ENCODE measurements at regions of chr12 and their contacts with region 1.

Region 1: DNA sequence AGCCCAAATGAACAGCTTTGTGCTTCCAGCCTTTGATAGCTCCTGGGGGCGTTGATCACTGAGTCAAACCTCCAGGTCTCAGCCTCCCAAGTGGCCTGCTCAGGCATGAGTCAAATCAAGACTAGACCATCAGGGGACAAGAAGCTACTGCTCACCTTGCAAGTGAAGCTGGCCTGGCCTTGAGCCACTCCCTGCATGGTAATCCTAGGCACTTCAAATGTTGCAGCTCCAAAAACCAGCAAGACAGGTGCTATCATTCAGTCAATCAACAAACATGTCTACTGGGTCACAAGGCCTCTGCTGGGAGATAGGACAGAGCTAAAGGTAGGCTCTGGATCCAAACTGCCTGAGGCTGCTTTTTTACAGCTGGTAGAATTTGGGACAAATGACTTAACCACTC is 33.1 kb upstream of the NOS1 start:
- DNase-seq: no peak
- H3K4me3 ChIP-seq: no peak overlapping the region
- H3K27ac ChIP-seq: no peak overlapping the region
- H3K4me1 ChIP-seq: no peaks in the 10 kb centered on the region
- H3K27me3 ChIP-seq: no peaks in the 10 kb centered on the region
- CTCF ChIP-seq: no peak

Region 2: GRCh38 chr12:117255386-117255785 is 139.1 kb before region 1 on chr12:
- CTCF ChIA-PET with region 1: no interaction called
- dilution Hi-C with region 1: no loop called
- in situ Hi-C with region 1: no loop called
- intact Hi-C with region 1: no loop called
- DNase-seq: no peak
- H3K4me3 ChIP-seq: no peak overlapping the region
- H3K27ac ChIP-seq: no peak overlapping the region
- H3K4me1 ChIP-seq: no peaks in the 10 kb centered on the region
- H3K27me3 ChIP-seq: no peaks in the 10 kb centered on the region
- CTCF ChIP-seq: no peak

Region 3: DNA sequence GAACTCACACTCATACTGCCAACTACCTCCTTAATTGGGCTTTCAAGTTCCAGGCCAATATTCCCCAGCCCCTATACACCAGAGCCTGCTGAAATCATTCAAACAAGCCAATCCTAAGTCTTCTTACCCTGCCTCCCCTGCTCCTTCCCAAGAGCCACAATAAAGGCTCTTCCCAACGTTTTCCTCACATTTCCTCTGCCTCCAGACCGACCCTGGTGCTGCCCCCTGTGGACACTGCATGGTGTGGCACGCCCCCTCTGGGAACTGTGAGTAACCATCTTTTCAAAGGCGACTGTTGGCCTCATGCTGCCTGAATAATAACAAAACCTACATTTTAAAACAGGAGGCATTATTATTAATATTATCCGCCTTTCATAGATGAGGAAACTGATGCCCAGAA is 78.5 kb after region 1 on chr12:
- CTCF ChIA-PET with region 1: no interaction called
- dilution Hi-C with region 1: loop called (anchors 5 kb)
- in situ Hi-C with region 1: no loop called
- intact Hi-C with region 1: no loop called
- DNase-seq: no peak
- H3K4me3 ChIP-seq: no peak overlapping the region
- H3K27ac ChIP-seq: no peak overlapping the region
- H3K4me1 ChIP-seq: no peaks in the 10 kb centered on the region
- H3K27me3 ChIP-seq: no peaks in the 10 kb centered on the region
- CTCF ChIP-seq: no peak